Caco-2 (cell line): ENCODE measurements at regions of chr3 and their contacts with region 1.

Region 1: GRCh38 chr3:30606301-30607031 is at the start of gene TGFBR2:
- DNase-seq: peak; percentile 94 to 98
- H3K4me3 ChIP-seq: peak within 1 kb of the TSS; percentile 68
- H3K4me3 Mint-ChIP-seq: peak within 1 kb of the TSS; percentile 90
- H3K27ac Mint-ChIP-seq: peak within 1 kb of the TSS; percentile 83
- H3K4me1 ChIP-seq: peaks cover 58% of the 10 kb centered on the region
- H3K4me1 Mint-ChIP-seq: peaks cover 34% of the 10 kb centered on the region
- H3K27me3 ChIP-seq: no peaks in the 10 kb centered on the region
- H3K27me3 Mint-ChIP-seq: no peaks in the 10 kb centered on the region
- CTCF ChIP-seq: peak in 1 of 2 experiments; percentile 11
- total RNA-seq, gene TGFBR2: 40.5 and 41.9 TPM in 2 replicates

Region 2: DNA sequence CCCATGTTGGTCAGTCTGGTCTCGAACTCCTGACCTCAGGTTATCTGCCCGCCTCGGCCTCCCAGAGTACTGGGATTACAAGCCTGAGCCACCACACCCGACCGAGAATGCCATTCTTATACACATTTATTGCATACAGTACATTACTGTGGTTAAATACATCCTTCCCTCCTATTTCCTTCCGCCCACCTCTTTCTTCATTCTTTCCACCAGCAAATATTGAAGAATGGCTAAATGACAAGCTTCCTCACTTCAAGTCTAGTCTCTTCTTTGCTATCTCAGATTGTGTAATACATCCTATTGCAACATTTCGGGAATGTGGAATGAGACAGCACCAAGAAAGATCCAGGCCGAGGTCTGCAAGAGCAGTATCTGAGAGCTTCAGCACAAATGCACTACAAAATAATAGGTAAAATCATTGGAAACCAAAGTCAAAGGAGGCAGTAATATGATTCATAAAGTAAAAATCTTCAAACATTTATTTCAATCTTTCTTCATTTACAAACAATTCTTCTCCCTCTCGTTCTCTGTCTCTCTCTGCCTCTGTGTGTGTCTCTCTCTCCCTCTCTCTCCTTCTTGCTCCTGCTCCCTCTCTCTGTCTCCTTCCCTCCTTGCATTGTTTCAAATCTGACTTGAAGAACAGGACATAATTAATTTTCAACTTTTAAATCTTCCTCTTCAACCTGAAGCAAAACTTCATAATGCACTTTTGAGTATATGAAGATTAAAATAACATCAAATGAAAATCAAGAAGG is 94.8 kb before region 1 on chr3:
- CTCF ChIA-PET with region 1: interaction called, 4 read pairs
- POLR2A ChIA-PET with region 1: no interaction called
- intact Hi-C with region 1: loop called (anchors 5 kb)
- DNase-seq: peak; percentile 65 to 68
- H3K4me3 ChIP-seq: no peak overlapping the region
- H3K4me3 Mint-ChIP-seq: peak overlapping the region; percentile 17
- H3K27ac Mint-ChIP-seq: peak overlapping the region; percentile 43
- H3K4me1 ChIP-seq: peaks cover 22% of the 10 kb centered on the region
- H3K4me1 Mint-ChIP-seq: peaks cover 11% of the 10 kb centered on the region
- H3K27me3 ChIP-seq: no peaks in the 10 kb centered on the region
- H3K27me3 Mint-ChIP-seq: no peaks in the 10 kb centered on the region
- CTCF ChIP-seq: no peak

Region 3: DNA sequence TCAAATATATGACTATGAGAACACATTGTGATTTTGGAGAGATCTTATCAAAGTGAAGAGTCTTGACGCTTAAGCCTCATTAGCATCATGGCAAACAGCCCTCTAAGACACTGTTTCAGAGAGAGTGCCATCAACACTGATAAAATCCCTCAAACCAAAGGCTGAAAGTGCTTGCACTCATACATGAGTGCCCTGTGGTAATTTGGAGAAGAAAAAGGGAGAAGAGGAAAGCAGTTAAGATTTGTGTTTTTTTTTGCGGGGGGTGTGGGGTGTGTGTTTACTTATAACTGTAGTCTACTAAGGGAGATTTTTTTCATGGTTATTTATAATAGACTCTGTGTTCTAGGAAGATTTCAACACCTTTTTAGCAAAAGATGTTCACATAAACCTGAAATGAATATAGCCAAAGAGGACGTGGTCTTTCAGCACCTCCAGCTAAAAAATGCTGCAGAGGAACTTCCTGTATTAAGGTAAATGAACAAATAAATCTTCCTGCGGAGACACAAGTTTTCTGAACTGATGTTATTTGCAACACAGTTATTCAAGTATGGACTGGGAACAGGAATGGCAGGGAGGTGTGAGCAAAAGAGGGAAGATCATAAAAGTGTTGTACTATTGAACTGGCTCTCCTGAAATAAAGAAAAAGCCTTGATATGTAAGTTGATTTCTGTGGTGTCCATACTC is 82.0 kb before region 1 on chr3:
- CTCF ChIA-PET with region 1: no interaction called
- POLR2A ChIA-PET with region 1: no interaction called
- intact Hi-C with region 1: loop called (anchors 5 kb)
- DNase-seq: no peak
- H3K4me3 ChIP-seq: no peak overlapping the region
- H3K4me3 Mint-ChIP-seq: no peak overlapping the region
- H3K27ac Mint-ChIP-seq: no peak overlapping the region
- H3K4me1 ChIP-seq: peaks cover 12% of the 10 kb centered on the region
- H3K4me1 Mint-ChIP-seq: peaks cover 31% of the 10 kb centered on the region
- H3K27me3 ChIP-seq: no peaks in the 10 kb centered on the region
- H3K27me3 Mint-ChIP-seq: no peaks in the 10 kb centered on the region
- CTCF ChIP-seq: no peak

Region 4: GRCh38 chr3:30583973-30584372 is 22.5 kb before region 1 on chr3:
- CTCF ChIA-PET with region 1: no interaction called
- POLR2A ChIA-PET with region 1: no interaction called
- intact Hi-C with region 1: loop called (anchors 1 kb)
- DNase-seq: peak in 1 of 2 experiments; percentile 62
- H3K4me3 ChIP-seq: no peak overlapping the region
- H3K4me3 Mint-ChIP-seq: no peak overlapping the region
- H3K27ac Mint-ChIP-seq: peak overlapping the region; percentile 88
- H3K4me1 ChIP-seq: peaks cover 62% of the 10 kb centered on the region
- H3K4me1 Mint-ChIP-seq: peaks cover 41% of the 10 kb centered on the region
- H3K27me3 ChIP-seq: no peaks in the 10 kb centered on the region
- H3K27me3 Mint-ChIP-seq: no peaks in the 10 kb centered on the region
- CTCF ChIP-seq: no peak

Region 5: GRCh38 chr3:30620402-30621360 is 14.2 kb after region 1 on chr3:
- CTCF ChIA-PET with region 1: no interaction called
- POLR2A ChIA-PET with region 1: no interaction called
- intact Hi-C with region 1: no loop called
- DNase-seq: no peak
- H3K4me3 ChIP-seq: no peak overlapping the region
- H3K4me3 Mint-ChIP-seq: no peak overlapping the region
- H3K27ac Mint-ChIP-seq: peak overlapping the region; percentile 55
- H3K4me1 ChIP-seq: peaks cover 64% of the 10 kb centered on the region
- H3K4me1 Mint-ChIP-seq: peaks cover 40% of the 10 kb centered on the region
- H3K27me3 ChIP-seq: no peaks in the 10 kb centered on the region
- H3K27me3 Mint-ChIP-seq: no peaks in the 10 kb centered on the region
- CTCF ChIP-seq: no peak

Region 6: GRCh38 chr3:30751610-30752299 is 145.3 kb after region 1 on chr3:
- CTCF ChIA-PET with region 1: no interaction called
- POLR2A ChIA-PET with region 1: no interaction called
- intact Hi-C with region 1: loop called (anchors 5 kb)
- DNase-seq: peak; percentile 51 to 58
- H3K4me3 ChIP-seq: no peak overlapping the region
- H3K4me3 Mint-ChIP-seq: no peak overlapping the region
- H3K27ac Mint-ChIP-seq: no peak overlapping the region
- H3K4me1 ChIP-seq: peaks cover 17% of the 10 kb centered on the region
- H3K4me1 Mint-ChIP-seq: peaks cover 15% of the 10 kb centered on the region
- H3K27me3 ChIP-seq: no peaks in the 10 kb centered on the region
- H3K27me3 Mint-ChIP-seq: no peaks in the 10 kb centered on the region
- CTCF ChIP-seq: peak; percentile 36 to 43

Region 7: DNA sequence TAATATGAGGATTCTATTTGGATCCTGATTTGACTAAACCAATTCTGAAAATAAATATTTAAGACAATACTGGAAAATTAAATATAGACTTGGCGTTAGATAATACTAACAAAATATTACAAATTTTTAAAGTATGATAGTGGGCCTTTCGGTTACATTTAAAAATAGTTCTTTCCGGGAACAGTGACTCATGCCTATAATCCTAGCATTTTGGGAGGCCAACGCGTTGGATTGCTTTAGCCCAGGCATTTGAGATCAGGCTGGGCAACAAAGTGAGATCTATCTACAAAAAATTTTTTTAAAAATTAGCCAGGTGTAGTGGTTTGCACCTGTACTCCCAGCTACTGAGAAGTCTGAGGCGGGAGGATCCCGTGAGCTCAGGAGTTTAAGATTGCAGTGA is 318.3 kb after region 1 on chr3:
- CTCF ChIA-PET with region 1: no interaction called
- POLR2A ChIA-PET with region 1: no interaction called
- intact Hi-C with region 1: no loop called
- DNase-seq: no peak
- H3K4me3 ChIP-seq: no peak overlapping the region
- H3K4me3 Mint-ChIP-seq: no peak overlapping the region
- H3K27ac Mint-ChIP-seq: no peak overlapping the region
- H3K4me1 ChIP-seq: no peaks in the 10 kb centered on the region
- H3K4me1 Mint-ChIP-seq: peaks cover 4% of the 10 kb centered on the region
- H3K27me3 ChIP-seq: no peaks in the 10 kb centered on the region
- H3K27me3 Mint-ChIP-seq: no peaks in the 10 kb centered on the region
- CTCF ChIP-seq: no peak